PC-3 (cell line): ENCODE measurements at regions of chr6 and their contacts with region 1.

Region 1: GRCh38 chr6:64012351-64013001 is 376.9 kb downstream of the PHF3 start:
- DNase-seq: peak; percentile 73
- ATAC-seq: peak; percentile 94
- H3K4me3 ChIP-seq: no peak overlapping the region
- H3K27ac ChIP-seq: no peak overlapping the region
- H3K4me1 ChIP-seq: peaks cover 4% of the 10 kb centered on the region; the same call in 1 of the 2 replicates
- H3K27me3 ChIP-seq: no peaks in the 10 kb centered on the region
- CTCF ChIP-seq: peak; percentile 83

Region 2: GRCh38 chr6:63997217-63997616 is 15.3 kb before region 1 on chr6:
- CTCF ChIA-PET with region 1: no interaction called
- POLR2A ChIA-PET with region 1: no interaction called
- intact Hi-C with region 1: no loop called
- DNase-seq: no peak
- ATAC-seq: no peak; the same call in 1 of the 2 replicates
- H3K4me3 ChIP-seq: no peak overlapping the region
- H3K27ac ChIP-seq: no peak overlapping the region
- H3K4me1 ChIP-seq: peaks cover 8% of the 10 kb centered on the region; the same call in 1 of the 2 replicates
- H3K27me3 ChIP-seq: no peaks in the 10 kb centered on the region
- CTCF ChIP-seq: no peak

Region 3: DNA sequence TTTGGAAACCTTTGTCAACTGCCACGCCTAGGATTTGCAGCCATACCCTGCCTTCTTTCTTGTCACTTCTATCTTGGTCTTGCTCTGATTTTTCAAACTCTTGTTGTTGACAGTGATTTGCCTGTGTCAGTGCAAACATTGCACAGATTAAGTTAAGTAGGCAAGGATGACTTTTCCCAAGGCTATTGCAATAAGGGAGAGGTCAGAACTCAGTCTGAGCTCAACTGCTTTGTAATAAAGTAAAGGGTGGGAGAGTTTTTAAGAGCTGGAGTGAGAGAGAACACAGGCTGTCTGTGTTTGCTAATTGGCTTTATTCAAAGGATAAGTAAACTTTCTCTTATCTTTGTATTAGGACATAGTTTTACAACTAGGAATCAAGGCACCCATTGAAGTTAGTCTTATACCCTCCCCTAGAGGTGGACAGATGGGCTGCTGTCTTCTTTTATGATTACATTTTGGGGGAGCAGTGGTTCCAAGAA is 71.7 kb after region 1 on chr6:
- CTCF ChIA-PET with region 1: no interaction called
- POLR2A ChIA-PET with region 1: no interaction called
- intact Hi-C with region 1: loop called (anchors 1 kb)
- DNase-seq: peak; percentile 49
- ATAC-seq: peak; percentile 90
- H3K4me3 ChIP-seq: no peak overlapping the region
- H3K27ac ChIP-seq: peak overlapping the region; percentile 60
- H3K4me1 ChIP-seq: peaks cover 11% of the 10 kb centered on the region
- H3K27me3 ChIP-seq: no peaks in the 10 kb centered on the region
- CTCF ChIP-seq: no peak

Region 4: GRCh38 chr6:64330694-64331307 is 318.3 kb after region 1 on chr6:
- CTCF ChIA-PET with region 1: interaction called, 11 read pairs
- POLR2A ChIA-PET with region 1: interaction called, 3 read pairs
- intact Hi-C with region 1: loop called (anchors 1 kb)
- DNase-seq: peak; percentile 86
- ATAC-seq: peak; percentile 80
- H3K4me3 ChIP-seq: no peak overlapping the region
- H3K27ac ChIP-seq: no peak overlapping the region
- H3K4me1 ChIP-seq: no peaks in the 10 kb centered on the region
- H3K27me3 ChIP-seq: no peaks in the 10 kb centered on the region
- CTCF ChIP-seq: peak; percentile 74

Region 5: GRCh38 chr6:64732888-64733287 is 720.4 kb after region 1 on chr6:
- CTCF ChIA-PET with region 1: interaction called, 3 read pairs
- POLR2A ChIA-PET with region 1: no interaction called
- intact Hi-C with region 1: loop called (anchors 10 kb)
- DNase-seq: peak; percentile 53
- ATAC-seq: peak; percentile 61
- H3K4me3 ChIP-seq: no peak overlapping the region
- H3K27ac ChIP-seq: no peak overlapping the region
- H3K4me1 ChIP-seq: 0 out of 2 replicates have a peak, but pooled peaks cover 3% of the 10 kb centered on the region
- H3K27me3 ChIP-seq: no peaks in the 10 kb centered on the region
- CTCF ChIP-seq: peak; percentile 67